Dendritic cell treated with granulocyte-macrophage colony-stimulating factor and Interleukin-4, amounts not matched to agents 40 ng/mL and 50 ng/mL, for 4 days (primary cell): ENCODE measurements at regions of chr15 and their contacts with region 1.

Region 1: GRCh38 chr15:73273181-73274002 is 95.4 kb downstream of the HCN4 start:
- H3K4me3 Mint-ChIP-seq: no peak overlapping the region
- H3K27ac Mint-ChIP-seq: no peak overlapping the region
- H3K4me1 Mint-ChIP-seq: no peaks in the 10 kb centered on the region
- H3K27me3 Mint-ChIP-seq: peaks cover 24% of the 10 kb centered on the region

Region 2: DNA sequence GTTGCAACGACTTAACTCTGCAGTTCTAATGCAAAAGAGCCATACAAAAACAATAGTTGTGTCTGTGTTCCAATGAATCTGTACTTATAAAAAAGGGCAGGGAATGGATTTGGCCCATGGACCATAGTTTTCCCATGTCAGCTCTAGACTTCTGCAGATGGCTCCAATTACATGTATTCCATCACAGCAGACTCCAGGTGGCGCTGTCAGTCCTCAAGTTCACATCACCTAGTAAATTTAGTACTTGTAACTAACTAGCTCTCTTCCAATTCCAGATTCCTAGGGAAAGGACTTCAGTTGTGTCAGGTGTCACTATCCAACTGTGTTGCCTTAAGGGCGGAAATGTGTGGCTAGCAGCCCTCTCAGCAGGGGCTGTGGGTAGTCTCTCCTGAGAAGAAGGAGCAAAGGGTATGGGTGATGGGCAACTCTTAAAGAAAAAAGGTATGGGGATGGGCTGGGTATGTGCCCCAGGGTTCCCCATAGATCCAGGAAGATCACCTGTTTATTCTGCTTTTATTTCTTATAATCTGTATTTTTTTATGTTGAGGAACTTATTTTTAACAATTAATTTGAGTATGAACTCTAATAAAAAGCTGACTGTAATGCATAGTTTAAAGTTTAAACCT is 551.2 kb before region 1 on chr15:
- intact Hi-C with region 1: loop called (anchors 5 kb)
- H3K4me3 Mint-ChIP-seq: no peak overlapping the region
- H3K27ac Mint-ChIP-seq: no peak overlapping the region
- H3K4me1 Mint-ChIP-seq: peaks cover 11% of the 10 kb centered on the region
- H3K27me3 Mint-ChIP-seq: no peaks in the 10 kb centered on the region

Region 3: DNA sequence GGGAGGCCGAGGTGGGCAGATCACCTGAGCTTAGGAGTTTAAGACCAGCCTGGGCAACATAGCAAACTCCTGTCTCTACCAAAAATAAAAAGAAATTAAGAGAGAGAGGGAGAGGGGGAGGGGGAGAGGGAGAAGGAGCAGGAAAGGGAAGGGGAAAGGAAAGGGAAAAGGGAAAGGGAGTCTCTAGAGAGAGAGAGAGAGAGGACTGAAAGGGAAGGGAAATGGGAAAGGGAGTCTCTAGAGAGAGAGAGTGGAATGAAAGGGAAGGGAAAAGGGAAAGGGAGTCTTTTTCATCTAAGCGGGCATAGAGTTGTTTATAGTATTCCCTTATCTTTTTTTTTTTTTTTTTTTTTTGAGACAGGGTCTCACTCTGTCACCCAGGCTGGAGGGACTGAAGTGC is 73.1 kb before region 1 on chr15:
- intact Hi-C with region 1: no loop called
- H3K4me3 Mint-ChIP-seq: no peak overlapping the region
- H3K27ac Mint-ChIP-seq: no peak overlapping the region
- H3K4me1 Mint-ChIP-seq: no peaks in the 10 kb centered on the region
- H3K27me3 Mint-ChIP-seq: peaks cover 22% of the 10 kb centered on the region

Region 4: DNA sequence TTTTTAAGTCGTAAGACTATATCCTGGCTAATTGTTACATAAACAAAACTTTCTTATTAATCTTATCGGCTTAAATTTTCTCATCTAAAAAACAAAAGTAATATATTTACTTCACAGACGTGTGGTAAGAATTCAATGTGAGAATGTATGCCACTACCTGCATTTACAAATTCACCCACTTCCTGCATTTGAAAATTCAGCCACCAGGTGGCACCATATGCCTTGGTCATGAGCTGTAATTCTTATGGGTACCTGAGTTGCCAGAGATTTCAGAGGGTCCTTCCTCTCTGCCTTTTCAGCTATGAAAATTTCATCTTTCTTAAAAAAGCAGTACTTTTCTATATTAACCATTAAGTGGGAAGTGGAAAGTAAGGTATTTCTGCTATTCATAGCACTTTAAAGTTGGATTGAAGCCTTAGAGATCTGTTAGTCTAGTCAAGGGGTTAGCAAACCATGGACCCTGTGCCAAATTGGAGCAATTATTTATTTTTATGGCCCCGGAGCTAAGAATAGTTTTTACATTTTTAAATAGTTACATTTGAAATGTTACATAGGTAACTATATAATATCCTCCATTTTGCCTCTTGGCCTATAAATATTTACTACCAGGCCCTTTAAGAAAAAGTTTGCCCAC is 32.4 kb before region 1 on chr15:
- intact Hi-C with region 1: loop called (anchors 1 kb)
- H3K4me3 Mint-ChIP-seq: no peak overlapping the region
- H3K27ac Mint-ChIP-seq: no peak overlapping the region
- H3K4me1 Mint-ChIP-seq: no peaks in the 10 kb centered on the region
- H3K27me3 Mint-ChIP-seq: peaks cover 16% of the 10 kb centered on the region